Stomach (tissue), 19 donors: ENCODE measurements at regions of chr17 and their contacts with region 1.

Region 1: GRCh38 chr17:69567130-69567529 is 152.6 kb downstream of the MAP2K6 start:
- DNase-seq: peak in 1 of 2 donors; percentile 22
- H3K4me3 ChIP-seq: no peak overlapping the region
- H3K27ac ChIP-seq: no peak overlapping the region
- H3K4me1 ChIP-seq: peaks cover 0 to 5% (median 2%) of the 10 kb centered on the region in 4 donors
- H3K27me3 ChIP-seq: no peaks in the 10 kb centered on the region
- CTCF ChIP-seq: no peak
- EP300 ChIP-seq: no peak
- POLR2A ChIP-seq: no peak

Region 2: GRCh38 chr17:70552230-70552981 is 985.3 kb after region 1 on chr17:
- intact Hi-C with region 1: loop called (anchors 10 kb)
- DNase-seq: peak in 1 of 2 donors; percentile 72
- H3K4me3 ChIP-seq: no peak overlapping the region
- H3K27ac ChIP-seq: no peak overlapping the region
- H3K4me1 ChIP-seq: no peaks in the 10 kb centered on the region
- H3K27me3 ChIP-seq: no peaks in the 10 kb centered on the region
- CTCF ChIP-seq: peak in 4 of 7 experiments; percentile 28 to 55 (median 49)
- EP300 ChIP-seq: no peak
- POLR2A ChIP-seq: no peak